AG04449 (cell line): ENCODE measurements at regions of chr11 and their contacts with region 1.

Region 1: GRCh38 chr11:119205574-119206510 is at the start of gene CBL:
- DNase-seq: no peak
- H3K4me3 ChIP-seq: peak within 1 kb of the TSS; percentile 91
- CTCF ChIP-seq: peak; percentile 92

Region 2: DNA sequence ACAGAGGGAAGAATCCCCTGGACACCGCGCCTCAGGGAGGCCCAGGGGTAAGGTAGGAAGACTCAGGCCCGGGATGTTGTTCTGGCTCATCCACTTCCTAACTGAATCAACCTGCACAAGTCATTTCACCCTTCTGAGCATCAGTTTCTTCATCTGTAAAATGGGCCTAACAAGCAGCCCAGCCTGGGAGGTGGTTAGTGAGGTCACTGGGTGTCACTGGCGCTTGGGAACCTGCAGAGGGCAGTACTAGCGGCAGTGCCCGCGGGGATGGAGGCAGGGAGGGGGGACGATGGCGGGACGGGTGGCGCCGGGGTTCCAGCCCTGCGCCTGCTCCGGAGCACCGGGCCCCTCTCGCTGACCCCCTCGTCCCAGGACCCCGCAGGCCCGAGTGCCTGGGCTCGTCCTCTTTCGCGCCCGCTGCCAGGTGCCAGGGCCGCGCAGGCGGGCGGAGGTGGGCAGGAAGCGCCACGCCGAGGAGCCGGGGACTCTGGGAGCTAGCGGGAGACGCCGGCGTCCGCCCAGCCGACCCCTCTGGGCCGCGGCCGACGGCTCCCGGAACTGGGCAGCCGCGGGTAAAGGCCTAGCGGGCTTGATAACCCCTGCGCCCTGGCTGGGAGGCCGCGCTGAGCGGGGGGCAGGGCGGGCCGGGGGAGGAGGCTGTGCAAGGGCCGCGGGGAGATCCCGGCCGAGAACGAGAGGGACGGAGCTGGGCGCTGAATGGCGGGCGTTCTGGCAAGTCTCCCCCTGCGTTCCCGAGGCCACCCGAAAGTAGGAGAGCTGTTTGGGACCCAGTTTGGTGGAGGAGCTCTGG is 37.2 kb before region 1 on chr11 and contains the start of gene NLRX1:
- CTCF ChIA-PET with region 1: interaction called, 14 read pairs
- POLR2A ChIA-PET with region 1: interaction called, 3 read pairs
- DNase-seq: peak; percentile 19
- H3K4me3 ChIP-seq: peak within 1 kb of the TSS; percentile 70
- CTCF ChIP-seq: peak; percentile 93

Region 3: GRCh38 chr11:119222308-119222707 is 16.5 kb after region 1 on chr11:
- CTCF ChIA-PET with region 1: interaction called, 51 read pairs
- POLR2A ChIA-PET with region 1: no interaction called
- DNase-seq: no peak
- H3K4me3 ChIP-seq: no peak overlapping the region
- CTCF ChIP-seq: no peak

Region 4: GRCh38 chr11:119273721-119274120 is 67.9 kb after region 1 on chr11:
- CTCF ChIA-PET with region 1: interaction called, 15 read pairs
- POLR2A ChIA-PET with region 1: no interaction called
- DNase-seq: no peak
- H3K4me3 ChIP-seq: no peak overlapping the region
- CTCF ChIP-seq: no peak

Region 5: GRCh38 chr11:119300198-119300964 is 94.5 kb after region 1 on chr11:
- CTCF ChIA-PET with region 1: interaction called, 18 read pairs
- POLR2A ChIA-PET with region 1: no interaction called
- DNase-seq: no peak
- H3K4me3 ChIP-seq: no peak overlapping the region
- CTCF ChIP-seq: no peak

Region 6: GRCh38 chr11:119323538-119324033 is 117.7 kb after region 1 on chr11:
- CTCF ChIA-PET with region 1: interaction called, 66 read pairs
- POLR2A ChIA-PET with region 1: interaction called, 3 read pairs
- DNase-seq: no peak
- H3K4me3 ChIP-seq: no peak overlapping the region
- CTCF ChIP-seq: peak; percentile 65

Region 7: GRCh38 chr11:119445850-119446249 is 240.0 kb after region 1 on chr11:
- CTCF ChIA-PET with region 1: no interaction called
- POLR2A ChIA-PET with region 1: no interaction called
- DNase-seq: no peak
- H3K4me3 ChIP-seq: no peak overlapping the region
- CTCF ChIP-seq: no peak